CD14-positive monocyte (primary cell): ENCODE measurements at regions of chr3 and their contacts with region 1.

Region 1: DNA sequence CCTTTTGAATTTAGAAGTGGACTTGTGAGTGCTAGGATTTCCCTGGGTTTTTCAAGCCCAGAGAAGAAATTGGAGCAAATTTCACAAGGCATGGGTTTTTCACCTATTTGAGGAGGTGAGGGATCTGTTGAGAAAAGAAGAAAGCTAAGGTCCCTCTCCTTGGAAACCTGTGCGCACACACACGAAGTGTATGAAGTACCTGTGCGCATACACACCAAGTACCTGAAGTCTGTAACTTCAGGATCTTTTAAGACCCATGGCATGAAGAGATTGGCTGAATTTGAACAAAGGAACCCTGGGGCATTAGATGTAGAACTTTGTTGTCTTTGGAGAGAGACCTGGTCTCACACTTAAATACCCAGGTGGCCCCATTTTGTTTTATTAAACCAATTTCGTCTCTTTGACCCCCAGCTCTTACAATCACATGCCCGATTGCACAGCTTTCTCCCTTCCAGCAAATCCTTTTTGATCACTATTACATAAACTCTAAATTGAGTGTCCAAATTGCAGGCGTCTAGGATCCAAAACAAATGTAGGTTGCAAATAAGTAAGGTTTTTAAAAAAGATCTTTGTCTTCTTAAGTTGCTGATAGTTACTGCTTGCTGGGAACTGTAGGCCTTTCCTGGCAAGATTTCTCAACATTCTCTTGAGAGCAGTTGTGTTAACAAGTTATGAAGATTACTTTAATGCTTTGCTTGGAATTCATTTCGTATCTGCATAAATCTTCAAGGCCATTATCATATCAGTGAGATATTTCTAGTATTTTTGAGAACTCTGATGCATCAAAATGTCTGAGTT is 64.3 kb downstream of the CMTM8 start:
- DNase-seq: no peak
- H3K4me3 ChIP-seq: no peak overlapping the region
- H3K4me3 Mint-ChIP-seq: no peak overlapping the region
- H3K27ac ChIP-seq: no peak overlapping the region
- H3K27ac Mint-ChIP-seq: peak overlapping the region in 1 of 7 donors; percentile 63
- H3K4me1 ChIP-seq: no peaks in the 10 kb centered on the region
- H3K4me1 Mint-ChIP-seq: peaks cover 2% of the 10 kb centered on the region
- H3K27me3 ChIP-seq: no peaks in the 10 kb centered on the region
- H3K27me3 Mint-ChIP-seq: peaks cover 0 to 6% (median 0%) of the 10 kb centered on the region in 3 donors
- CTCF ChIP-seq: no peak

Region 2: GRCh38 chr3:32203854-32204253 is 98.9 kb before region 1 on chr3:
- intact Hi-C with region 1: no loop called
- DNase-seq: no peak
- H3K4me3 ChIP-seq: no peak overlapping the region
- H3K4me3 Mint-ChIP-seq: no peak overlapping the region
- H3K27ac ChIP-seq: no peak overlapping the region
- H3K27ac Mint-ChIP-seq: no peak overlapping the region
- H3K4me1 ChIP-seq: peaks cover 4% of the 10 kb centered on the region in 2 donors
- H3K4me1 Mint-ChIP-seq: peaks cover 16% of the 10 kb centered on the region
- H3K27me3 ChIP-seq: no peaks in the 10 kb centered on the region
- H3K27me3 Mint-ChIP-seq: peaks cover 0 to 5% (median 0%) of the 10 kb centered on the region in 3 donors
- CTCF ChIP-seq: no peak

Region 3: DNA sequence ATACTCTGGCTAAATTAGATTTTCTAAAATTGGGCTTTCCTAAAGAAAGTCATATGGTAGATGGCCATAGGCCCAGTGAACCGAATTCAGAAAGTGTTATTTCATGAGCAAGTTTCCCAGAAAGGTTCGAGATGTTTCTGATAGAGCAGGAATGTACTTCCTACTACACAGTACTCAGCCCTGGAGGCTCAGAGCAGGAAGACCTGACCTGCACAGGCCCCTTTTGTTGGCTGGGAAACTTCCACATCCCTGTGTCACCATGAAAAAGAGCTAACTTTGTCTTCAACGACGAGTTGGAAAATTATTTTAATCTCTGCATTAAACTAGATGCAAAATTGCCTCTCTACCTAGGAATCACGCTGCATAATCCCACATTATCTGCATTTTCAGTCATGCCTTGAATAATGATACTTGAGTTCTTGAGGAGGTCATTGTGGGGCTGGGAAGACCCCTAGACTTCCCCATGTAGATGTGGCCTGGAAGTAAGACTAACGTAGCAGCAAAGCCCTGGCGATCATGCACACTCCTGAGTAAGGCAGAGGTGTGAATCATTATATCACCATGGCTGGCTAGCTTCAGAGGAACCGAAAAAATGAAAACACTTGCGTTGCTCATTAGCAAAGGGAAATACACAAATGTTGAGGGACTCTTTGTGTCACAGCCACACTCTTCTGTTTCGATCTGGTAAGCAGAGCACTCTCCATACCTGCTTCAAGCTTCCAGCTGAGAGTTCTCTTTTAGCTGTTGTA is 136.0 kb after region 1 on chr3:
- intact Hi-C with region 1: loop called in 1 of 2 experiments (anchors 10 kb)
- DNase-seq: no peak
- H3K4me3 ChIP-seq: no peak overlapping the region
- H3K4me3 Mint-ChIP-seq: no peak overlapping the region
- H3K27ac ChIP-seq: peak overlapping the region in 1 of 2 donors; percentile 31
- H3K27ac Mint-ChIP-seq: peak overlapping the region; percentile 3 to 59 (median 51)
- H3K4me1 ChIP-seq: peaks cover 1 to 2% of the 10 kb centered on the region in 2 donors
- H3K4me1 Mint-ChIP-seq: peaks cover 39% of the 10 kb centered on the region
- H3K27me3 ChIP-seq: no peaks in the 10 kb centered on the region
- H3K27me3 Mint-ChIP-seq: no peaks in the 10 kb centered on the region
- CTCF ChIP-seq: no peak